ENCODE measurements at regions of chrX and their contacts with region 1.

Region 1: GRCh38 chrX:68532831-68533533 is 34.1 kb downstream of the YIPF6 start:
- DNase-seq: no peak
- ATAC-seq: no peak
- H3K4me3 ChIP-seq: no peak overlapping the region
- H3K27ac ChIP-seq: no peak overlapping the region
- H3K4me1 ChIP-seq: no peaks in the 10 kb centered on the region
- H3K27me3 ChIP-seq: no peaks in the 10 kb centered on the region
- CTCF ChIP-seq: no peak

Region 2: GRCh38 chrX:68462653-68463052 is 70.3 kb before region 1 on chrX:
- CTCF ChIA-PET with region 1: no interaction called
- POLR2A ChIA-PET with region 1: interaction called, 12 read pairs
- in situ Hi-C with region 1: no loop called
- intact Hi-C with region 1: no loop called
- DNase-seq: peak; percentile 27
- ATAC-seq: peak; percentile 73; the same call in 1 of the 2 replicates
- H3K4me3 ChIP-seq: no peak overlapping the region
- H3K27ac ChIP-seq: no peak overlapping the region
- H3K4me1 ChIP-seq: no peaks in the 10 kb centered on the region; the same call in 1 of the 2 replicates
- H3K27me3 ChIP-seq: no peaks in the 10 kb centered on the region
- CTCF ChIP-seq: peak; percentile 71

Region 3: DNA sequence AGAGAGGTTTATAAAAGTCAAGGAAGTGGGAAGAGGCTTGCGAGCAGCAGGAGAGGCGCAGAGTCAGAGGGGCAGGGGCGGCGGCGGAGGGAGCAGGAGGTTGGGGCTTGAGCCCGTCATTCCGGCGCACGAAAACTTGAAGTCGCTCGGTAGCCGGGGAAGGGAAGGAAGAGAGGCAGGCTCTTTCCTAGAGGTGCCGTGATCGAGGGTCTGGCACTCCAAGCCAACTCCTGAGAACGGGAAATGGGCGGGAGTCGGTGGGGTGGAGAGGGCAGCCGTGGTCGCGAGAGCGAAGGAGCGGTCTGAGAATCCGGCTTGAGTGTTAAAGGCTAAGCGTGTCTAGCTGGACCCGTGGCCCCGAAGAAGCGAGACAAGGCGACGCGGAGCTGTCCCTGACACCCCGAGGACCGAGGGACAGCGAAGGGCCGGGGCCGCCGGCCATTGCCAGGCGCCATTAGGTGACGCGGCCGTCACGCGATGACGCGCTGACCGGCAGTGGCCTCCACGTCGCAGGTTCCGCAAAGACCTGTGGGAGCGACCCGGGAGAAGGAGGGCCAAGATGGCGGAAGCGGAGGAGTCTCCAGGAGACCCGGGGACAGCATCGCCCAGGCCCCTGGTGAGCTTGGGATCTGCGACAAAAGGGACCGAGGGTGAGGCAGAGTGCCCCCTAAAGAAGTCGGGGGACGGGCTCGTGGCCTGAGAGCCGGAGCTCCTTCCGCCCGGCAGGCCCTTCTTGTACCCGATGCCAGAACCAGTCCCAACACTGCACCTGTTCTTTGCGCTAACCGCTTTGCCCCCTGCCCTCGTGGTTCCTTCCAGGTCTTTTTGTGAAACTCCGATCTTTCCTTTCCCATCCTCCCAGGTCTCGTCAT is 34.2 kb before region 1 on chrX and contains the start of gene YIPF6:
- CTCF ChIA-PET with region 1: no interaction called
- POLR2A ChIA-PET with region 1: no interaction called
- in situ Hi-C with region 1: no loop called
- intact Hi-C with region 1: no loop called
- DNase-seq: no peak
- ATAC-seq: peak; percentile 98
- H3K4me3 ChIP-seq: peak within 1 kb of the TSS; percentile 81 to 83
- H3K27ac ChIP-seq: peak within 1 kb of the TSS; percentile 90
- H3K4me1 ChIP-seq: peaks cover 4% of the 10 kb centered on the region; the same call in 1 of the 2 replicates
- H3K27me3 ChIP-seq: no peaks in the 10 kb centered on the region
- CTCF ChIP-seq: no peak
- total RNA-seq, gene YIPF6: 61.3 TPM

Region 4: GRCh38 chrX:68550193-68550592 is 17.2 kb after region 1 on chrX:
- CTCF ChIA-PET with region 1: no interaction called
- POLR2A ChIA-PET with region 1: interaction called, 24 read pairs
- in situ Hi-C with region 1: no loop called
- intact Hi-C with region 1: no loop called
- DNase-seq: no peak
- ATAC-seq: no peak
- H3K4me3 ChIP-seq: no peak overlapping the region
- H3K27ac ChIP-seq: no peak overlapping the region
- H3K4me1 ChIP-seq: no peaks in the 10 kb centered on the region
- H3K27me3 ChIP-seq: no peaks in the 10 kb centered on the region
- CTCF ChIP-seq: no peak

Measured in Panc1 (cell line).